GM10248 (cell line): ENCODE measurements at regions of chr21 and their contacts with region 1.

Region 1: GRCh38 chr21:34630536-34631143 is 15.7 kb upstream of the RCAN1 start:
- DNase-seq: peak; percentile 70
- CTCF ChIP-seq: peak; percentile 72

Region 2: DNA sequence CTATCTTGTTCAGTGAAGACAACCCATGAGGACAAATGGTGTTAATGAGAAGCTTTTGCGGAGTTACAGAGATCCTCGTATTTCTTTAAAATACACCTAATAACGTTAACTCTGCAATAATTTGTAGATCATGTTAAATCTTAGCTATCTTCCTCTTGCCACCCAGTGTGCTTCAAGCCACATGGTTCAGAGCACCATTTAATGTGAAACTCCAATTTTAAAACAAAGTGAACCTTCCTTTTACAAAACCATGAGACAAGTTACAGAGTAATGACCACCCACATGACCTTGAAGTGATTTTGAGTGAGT is 268.6 kb before region 1 on chr21:
- CTCF ChIA-PET with region 1: interaction called, 29 read pairs
- POLR2A ChIA-PET with region 1: no interaction called
- DNase-seq: no peak
- CTCF ChIP-seq: no peak

Region 3: DNA sequence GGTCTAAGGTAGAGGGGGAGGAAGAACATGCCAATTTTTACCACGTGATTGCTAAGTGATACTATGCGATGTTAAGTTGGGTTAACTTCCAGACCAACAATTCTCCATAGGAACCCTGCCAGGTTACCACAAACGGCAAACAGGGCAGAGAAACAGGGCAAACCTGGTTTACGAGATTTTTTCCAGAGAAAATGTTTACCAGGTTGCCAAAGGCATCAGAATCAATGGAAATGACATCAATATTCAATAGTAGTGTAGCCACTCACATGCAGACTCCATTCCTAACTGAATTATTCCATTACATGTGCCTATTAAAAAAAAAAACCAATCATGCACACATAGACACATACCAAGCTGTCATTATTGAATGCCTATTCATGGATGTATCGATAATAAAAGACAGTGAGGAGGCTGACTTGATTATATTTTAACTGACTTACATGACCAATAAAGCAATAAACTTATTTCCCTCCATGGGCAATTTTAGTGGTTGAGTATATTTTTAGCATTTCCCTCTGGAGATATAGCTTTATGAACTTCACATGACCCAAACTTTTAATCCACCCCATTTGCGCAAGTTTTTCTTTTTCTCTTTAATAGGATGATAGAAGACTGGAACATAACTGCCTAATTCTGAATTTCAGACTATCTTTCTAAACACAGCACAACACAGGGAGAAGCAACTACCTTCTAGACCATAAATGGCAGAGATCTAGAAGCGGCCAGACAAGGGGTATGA is 78.1 kb before region 1 on chr21:
- CTCF ChIA-PET with region 1: no interaction called
- POLR2A ChIA-PET with region 1: no interaction called
- DNase-seq: no peak
- CTCF ChIP-seq: no peak

Region 4: DNA sequence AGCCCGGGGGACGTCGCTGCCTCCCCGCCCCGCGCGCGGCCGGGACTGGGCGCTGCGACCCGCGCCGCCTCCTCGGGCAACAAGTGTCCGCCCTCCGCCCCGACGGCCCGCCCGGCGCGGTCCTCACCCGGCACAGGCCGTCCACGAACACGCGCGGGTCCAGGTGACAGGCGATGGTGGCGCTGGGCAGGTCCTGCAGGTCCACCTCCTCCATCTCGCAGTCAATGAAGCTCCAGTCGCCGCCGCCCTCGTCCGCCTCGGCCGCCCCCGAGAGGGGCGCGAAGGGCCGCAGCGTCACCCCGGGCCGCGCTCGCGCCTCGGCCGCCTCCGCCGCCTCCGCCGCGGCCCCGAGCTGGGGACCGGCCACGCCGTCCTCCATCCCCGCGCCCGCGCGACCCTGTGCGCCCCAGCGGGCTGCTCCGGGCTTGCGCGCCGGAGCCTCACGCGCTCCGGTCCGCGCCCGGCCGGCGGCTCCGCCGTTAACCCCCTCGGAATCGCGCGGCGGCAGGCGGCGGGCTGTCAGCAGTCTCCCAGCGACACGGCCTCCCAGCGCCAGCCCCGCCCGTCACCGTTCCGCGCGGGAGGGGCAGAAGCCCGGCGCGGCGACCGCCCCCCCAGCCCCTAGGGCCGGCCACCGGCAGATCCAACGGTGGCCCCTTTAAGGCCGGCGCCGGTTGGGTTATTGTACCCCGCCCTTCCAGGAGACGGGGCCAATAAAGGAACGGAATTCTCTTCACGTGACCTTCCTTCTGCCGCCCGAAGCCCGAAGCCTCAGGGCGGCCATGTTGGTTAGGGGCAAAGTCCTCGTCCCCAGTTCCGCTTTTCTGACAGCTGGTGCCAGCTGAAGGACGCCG is 15.8 kb before region 1 on chr21 and contains the start of gene RCAN1:
- CTCF ChIA-PET with region 1: interaction called, 37 read pairs
- POLR2A ChIA-PET with region 1: no interaction called
- DNase-seq: peak; percentile 94
- CTCF ChIP-seq: no peak

Region 5: DNA sequence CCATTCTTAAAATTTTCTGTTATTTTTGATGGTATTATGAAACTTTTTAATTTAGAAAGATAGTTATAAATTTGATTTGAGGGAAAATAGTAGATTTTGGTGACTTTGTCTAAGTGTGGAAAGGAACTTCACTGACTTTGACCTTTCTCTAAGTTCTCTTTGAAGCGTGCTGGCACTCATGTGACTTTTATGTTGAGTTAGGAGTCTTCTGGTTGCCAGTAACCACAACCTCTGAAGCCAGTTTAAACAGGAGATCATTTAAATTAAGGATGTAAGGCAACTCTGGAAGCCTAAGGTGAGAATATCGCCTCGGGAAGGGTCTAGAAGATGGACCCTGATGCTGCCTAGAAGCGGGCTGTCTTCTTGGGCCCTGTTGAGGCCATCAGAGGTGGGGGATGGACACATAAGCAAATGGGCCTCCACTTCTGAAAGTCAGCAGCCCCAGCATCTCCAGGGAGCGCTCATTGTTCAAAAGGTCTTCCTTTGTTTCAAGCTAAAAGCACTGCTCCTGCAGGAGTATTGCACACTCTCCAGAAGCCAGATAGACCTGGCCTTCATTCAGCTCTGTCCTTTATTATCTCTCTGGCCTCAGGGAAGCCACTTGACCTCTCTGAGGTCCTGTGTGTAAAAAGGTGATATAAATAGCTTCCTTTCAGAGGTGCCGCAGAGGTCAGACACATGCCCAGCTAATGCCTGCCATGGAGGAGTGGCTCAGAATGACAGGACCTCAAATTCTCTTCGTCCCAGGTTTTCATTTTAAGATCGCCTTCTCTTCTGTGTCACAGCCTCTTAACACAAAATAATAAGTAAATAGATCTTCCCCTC is 10.6 kb before region 1 on chr21:
- CTCF ChIA-PET with region 1: interaction called, 37 read pairs
- POLR2A ChIA-PET with region 1: no interaction called
- DNase-seq: no peak
- CTCF ChIP-seq: no peak

Region 6: GRCh38 chr21:34649400-34649799 is 18.8 kb after region 1 on chr21:
- CTCF ChIA-PET with region 1: interaction called, 16 read pairs
- POLR2A ChIA-PET with region 1: no interaction called
- DNase-seq: no peak
- CTCF ChIP-seq: no peak